Mammary epithelial cell (primary cell): ENCODE measurements at regions of chr3 and their contacts with region 1.

Region 1: GRCh38 chr3:118544458-118544857 is 490.2 kb downstream of the IGSF11 start:
- DNase-seq: peak; percentile 78
- H3K4me3 ChIP-seq: no peak overlapping the region
- H3K27ac ChIP-seq: peak overlapping the region; percentile 85
- H3K4me1 ChIP-seq: peaks cover 52% of the 10 kb centered on the region
- H3K27me3 ChIP-seq: no peaks in the 10 kb centered on the region
- CTCF ChIP-seq: no peak

Region 2: DNA sequence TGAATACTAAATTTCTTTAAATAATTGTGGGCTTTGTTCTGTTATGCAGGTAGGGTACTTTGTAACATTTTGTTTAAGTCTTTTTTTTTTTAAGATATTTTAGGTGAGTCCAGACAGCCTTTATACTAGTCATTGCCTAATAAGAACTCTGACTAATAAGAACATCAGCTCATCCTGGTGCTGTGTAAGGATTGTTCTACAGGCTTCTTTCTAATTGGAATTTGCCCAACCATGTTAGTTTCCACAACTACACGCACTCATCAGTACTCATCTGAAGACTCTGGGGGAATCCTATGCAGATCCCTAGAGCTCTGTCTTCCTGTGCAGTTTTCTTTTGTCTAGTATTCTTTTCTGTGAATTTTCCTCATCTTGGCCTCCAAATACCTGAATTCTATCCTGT is 251.6 kb before region 1 on chr3:
- CTCF ChIA-PET with region 1: no interaction called
- dilution Hi-C with region 1: no loop called
- in situ Hi-C with region 1: no loop called
- intact Hi-C with region 1: no loop called
- DNase-seq: peak; percentile 56
- H3K4me3 ChIP-seq: no peak overlapping the region
- H3K27ac ChIP-seq: no peak overlapping the region
- H3K4me1 ChIP-seq: peaks cover 3% of the 10 kb centered on the region
- H3K27me3 ChIP-seq: no peaks in the 10 kb centered on the region
- CTCF ChIP-seq: no peak

Region 3: GRCh38 chr3:118408431-118408830 is 136.0 kb before region 1 on chr3:
- CTCF ChIA-PET with region 1: no interaction called
- dilution Hi-C with region 1: no loop called
- in situ Hi-C with region 1: no loop called
- intact Hi-C with region 1: loop called (anchors 10 kb)
- DNase-seq: peak; percentile 86
- H3K4me3 ChIP-seq: no peak overlapping the region
- H3K27ac ChIP-seq: peak overlapping the region; percentile 21
- H3K4me1 ChIP-seq: no peaks in the 10 kb centered on the region
- H3K27me3 ChIP-seq: no peaks in the 10 kb centered on the region
- CTCF ChIP-seq: no peak

Region 4: DNA sequence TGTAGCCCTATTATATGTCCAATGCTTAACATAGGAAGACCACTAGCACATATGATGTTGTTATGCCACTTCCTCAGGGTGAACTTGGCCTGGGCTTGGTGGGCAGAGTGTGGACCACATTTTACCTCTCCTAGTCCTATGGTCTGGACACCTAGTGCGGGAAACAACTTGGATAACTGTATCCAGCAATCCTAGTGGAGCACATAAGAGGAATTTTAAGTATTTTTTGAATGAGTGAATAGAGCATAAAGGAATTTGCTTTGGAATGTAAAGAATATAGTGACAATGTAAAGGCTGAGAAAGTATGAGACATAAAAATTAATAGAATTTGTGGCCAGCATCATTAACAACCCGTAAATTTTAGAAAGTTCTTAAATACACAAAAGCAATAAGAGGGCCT is 38.7 kb before region 1 on chr3:
- CTCF ChIA-PET with region 1: no interaction called
- dilution Hi-C with region 1: no loop called
- in situ Hi-C with region 1: no loop called
- intact Hi-C with region 1: loop called (anchors 5 kb)
- DNase-seq: no peak
- H3K4me3 ChIP-seq: no peak overlapping the region
- H3K27ac ChIP-seq: peak overlapping the region; percentile 82
- H3K4me1 ChIP-seq: peaks cover 25% of the 10 kb centered on the region
- H3K27me3 ChIP-seq: no peaks in the 10 kb centered on the region
- CTCF ChIP-seq: no peak

Region 5: GRCh38 chr3:118597184-118597583 is 52.7 kb after region 1 on chr3:
- CTCF ChIA-PET with region 1: no interaction called
- dilution Hi-C with region 1: no loop called
- in situ Hi-C with region 1: no loop called
- intact Hi-C with region 1: no loop called
- DNase-seq: no peak
- H3K4me3 ChIP-seq: no peak overlapping the region
- H3K27ac ChIP-seq: no peak overlapping the region
- H3K4me1 ChIP-seq: no peaks in the 10 kb centered on the region
- H3K27me3 ChIP-seq: no peaks in the 10 kb centered on the region
- CTCF ChIP-seq: no peak

Region 6: DNA sequence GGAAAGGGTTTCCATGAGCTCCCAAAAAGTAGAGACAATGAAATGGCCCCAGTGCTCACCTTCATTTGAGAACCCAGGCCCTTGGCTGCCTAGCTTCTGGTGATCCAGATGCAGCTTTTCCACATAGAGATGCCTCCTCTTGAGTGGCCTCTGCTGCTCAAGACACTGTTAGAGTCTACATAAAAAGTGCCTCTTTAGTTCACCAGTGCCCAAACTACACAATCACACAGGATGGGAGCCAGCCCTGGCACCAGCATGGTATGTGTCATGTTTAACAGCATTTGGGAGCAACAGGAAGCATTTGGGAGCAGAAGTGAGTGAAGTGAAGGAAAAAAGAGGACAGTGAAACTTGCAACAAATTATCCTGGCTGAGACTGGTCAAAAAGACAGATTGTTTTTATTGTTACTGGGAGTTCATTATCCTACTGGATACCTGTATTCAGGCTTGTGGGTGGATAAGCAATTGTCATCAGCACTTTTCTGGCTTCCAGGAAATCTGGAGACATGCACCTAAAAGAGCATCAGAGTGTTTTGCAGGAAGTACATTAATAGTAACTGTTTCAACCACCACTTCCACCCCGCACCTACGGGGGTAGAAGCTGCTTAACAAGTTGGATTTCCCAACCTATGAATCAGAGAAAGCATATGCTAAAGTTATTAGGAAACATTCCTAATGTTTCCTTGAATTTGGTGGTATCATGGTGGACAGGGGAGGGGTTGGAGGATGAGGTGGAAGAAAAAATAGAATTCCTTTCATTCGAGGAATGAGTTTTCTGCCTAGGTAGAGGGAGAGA is 74.0 kb after region 1 on chr3:
- CTCF ChIA-PET with region 1: no interaction called
- dilution Hi-C with region 1: no loop called
- in situ Hi-C with region 1: no loop called
- intact Hi-C with region 1: loop called (anchors 10 kb)
- DNase-seq: peak; percentile 60
- H3K4me3 ChIP-seq: no peak overlapping the region
- H3K27ac ChIP-seq: no peak overlapping the region
- H3K4me1 ChIP-seq: peaks cover 11% of the 10 kb centered on the region
- H3K27me3 ChIP-seq: no peaks in the 10 kb centered on the region
- CTCF ChIP-seq: no peak

Region 7: DNA sequence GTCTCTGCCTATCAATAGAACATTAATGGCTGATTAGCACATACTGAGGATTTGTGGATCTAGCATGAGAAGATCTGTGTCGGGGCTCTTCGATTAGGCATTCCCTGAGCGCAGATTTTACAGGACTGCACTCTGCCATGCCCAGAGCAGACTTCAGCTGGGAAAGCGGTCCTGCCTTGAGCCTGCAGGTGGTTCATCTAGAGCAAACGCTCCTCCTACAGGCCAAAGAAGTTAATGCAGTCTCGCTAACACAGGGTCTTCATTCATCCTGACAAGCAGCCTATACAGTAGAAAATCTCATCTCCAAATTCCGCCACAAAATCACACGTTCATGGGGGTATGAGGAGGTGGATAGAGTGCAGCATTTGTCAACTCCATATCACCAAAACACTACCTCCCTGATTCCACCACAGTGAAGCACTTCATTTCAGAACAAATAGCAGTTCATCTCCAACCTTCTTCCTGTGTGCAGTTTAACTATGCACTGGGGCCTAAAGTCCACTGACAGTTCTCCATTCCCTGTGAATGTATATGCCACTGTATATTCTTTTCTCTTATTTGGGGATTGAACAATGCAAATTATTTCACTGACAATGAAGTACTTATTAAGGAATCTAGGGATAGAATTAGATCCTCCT is 84.4 kb after region 1 on chr3:
- CTCF ChIA-PET with region 1: no interaction called
- dilution Hi-C with region 1: no loop called
- in situ Hi-C with region 1: no loop called
- intact Hi-C with region 1: no loop called
- DNase-seq: peak; percentile 52
- H3K4me3 ChIP-seq: no peak overlapping the region
- H3K27ac ChIP-seq: no peak overlapping the region
- H3K4me1 ChIP-seq: no peaks in the 10 kb centered on the region
- H3K27me3 ChIP-seq: no peaks in the 10 kb centered on the region
- CTCF ChIP-seq: peak; percentile 95 to 96

Region 8: DNA sequence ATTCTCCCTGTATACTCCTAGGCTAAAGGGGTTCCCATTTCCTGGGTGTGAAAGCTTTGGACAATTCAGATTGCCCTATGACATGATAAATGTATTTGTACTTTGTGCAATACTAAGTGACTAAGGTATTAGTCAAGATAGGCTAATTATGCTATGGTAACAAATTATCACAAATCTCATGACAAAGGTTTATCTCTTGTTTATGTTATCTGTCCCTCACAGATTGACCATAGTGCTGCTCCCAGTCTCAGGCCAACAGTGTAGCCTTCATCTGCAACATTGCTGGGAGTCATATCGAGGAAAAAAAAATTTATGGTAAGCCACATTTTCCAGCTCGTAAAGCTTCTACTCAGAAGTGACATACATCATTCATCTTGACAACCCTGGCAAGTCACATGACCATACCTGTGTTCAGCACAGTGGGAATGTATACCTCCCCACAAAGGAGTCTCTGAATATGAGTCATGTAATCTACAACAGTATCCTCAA is 144.0 kb after region 1 on chr3:
- CTCF ChIA-PET with region 1: no interaction called
- dilution Hi-C with region 1: no loop called
- in situ Hi-C with region 1: no loop called
- intact Hi-C with region 1: no loop called
- DNase-seq: peak; percentile 5
- H3K4me3 ChIP-seq: no peak overlapping the region
- H3K27ac ChIP-seq: no peak overlapping the region
- H3K4me1 ChIP-seq: no peaks in the 10 kb centered on the region
- H3K27me3 ChIP-seq: peaks cover 3% of the 10 kb centered on the region
- CTCF ChIP-seq: no peak